ENCODE measurements at regions of chr2 and their contacts with region 1.

Region 1: DNA sequence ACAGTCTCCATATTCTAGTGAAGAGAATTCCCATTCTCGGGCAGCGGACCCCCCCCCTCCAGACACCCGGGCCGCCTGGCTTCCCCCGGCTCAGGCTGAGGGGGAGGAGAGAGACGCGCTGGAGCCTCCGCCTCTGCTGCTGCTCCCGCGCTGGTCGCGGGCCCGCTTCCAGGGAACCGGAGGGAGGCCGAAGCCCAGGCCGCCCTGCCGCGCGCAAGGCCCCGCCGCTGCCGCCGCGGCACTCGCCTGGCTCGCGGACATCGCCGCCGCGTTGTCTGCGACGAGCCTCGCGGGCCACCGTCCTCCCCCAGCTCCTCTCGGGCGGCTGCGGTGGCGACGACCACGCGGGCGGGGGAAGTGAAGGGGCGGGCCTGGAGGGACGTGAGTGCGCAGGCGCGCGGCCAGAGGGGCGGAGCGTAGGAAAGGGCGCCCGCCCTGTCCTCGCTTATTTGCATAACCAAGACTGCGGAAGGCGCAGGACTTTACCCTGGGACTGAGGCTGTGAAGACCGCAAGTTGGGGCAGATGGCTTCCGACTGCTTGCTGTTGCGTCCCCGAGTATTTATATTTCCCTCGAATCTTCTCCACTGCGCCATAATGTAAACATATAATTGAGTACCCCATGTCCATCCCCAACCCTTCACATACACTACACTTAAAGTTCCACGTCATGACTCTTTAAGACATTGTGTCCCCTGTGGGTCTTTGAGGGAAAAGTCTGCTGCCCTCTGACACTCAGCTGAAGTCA is at the start of gene ARL5A:
- DNase-seq: peak; percentile 94
- ATAC-seq: peak; percentile 96
- H3K4me3 ChIP-seq: peak within 1 kb of the TSS; percentile 99
- H3K27ac ChIP-seq: no peak within 1 kb of the TSS
- H3K4me1 ChIP-seq: peaks cover 8% of the 10 kb centered on the region; the same call in 1 of the 2 replicates
- H3K27me3 ChIP-seq: no peaks in the 10 kb centered on the region
- CTCF ChIP-seq: no peak
- total RNA-seq, gene ARL5A: 45.6 and 53.0 TPM in 2 replicates

Region 2: GRCh38 chr2:151771599-151772358 is 56.5 kb before region 1 on chr2:
- CTCF ChIA-PET with region 1: no interaction called
- POLR2A ChIA-PET with region 1: no interaction called
- intact Hi-C with region 1: loop called (anchors 5 kb)
- DNase-seq: no peak
- ATAC-seq: no peak
- H3K4me3 ChIP-seq: no peak overlapping the region
- H3K27ac ChIP-seq: no peak overlapping the region
- H3K4me1 ChIP-seq: peaks cover 17% of the 10 kb centered on the region
- H3K27me3 ChIP-seq: no peaks in the 10 kb centered on the region
- CTCF ChIP-seq: no peak